ENCODE measurements at regions of chr6 and their contacts with region 1.

Region 1: DNA sequence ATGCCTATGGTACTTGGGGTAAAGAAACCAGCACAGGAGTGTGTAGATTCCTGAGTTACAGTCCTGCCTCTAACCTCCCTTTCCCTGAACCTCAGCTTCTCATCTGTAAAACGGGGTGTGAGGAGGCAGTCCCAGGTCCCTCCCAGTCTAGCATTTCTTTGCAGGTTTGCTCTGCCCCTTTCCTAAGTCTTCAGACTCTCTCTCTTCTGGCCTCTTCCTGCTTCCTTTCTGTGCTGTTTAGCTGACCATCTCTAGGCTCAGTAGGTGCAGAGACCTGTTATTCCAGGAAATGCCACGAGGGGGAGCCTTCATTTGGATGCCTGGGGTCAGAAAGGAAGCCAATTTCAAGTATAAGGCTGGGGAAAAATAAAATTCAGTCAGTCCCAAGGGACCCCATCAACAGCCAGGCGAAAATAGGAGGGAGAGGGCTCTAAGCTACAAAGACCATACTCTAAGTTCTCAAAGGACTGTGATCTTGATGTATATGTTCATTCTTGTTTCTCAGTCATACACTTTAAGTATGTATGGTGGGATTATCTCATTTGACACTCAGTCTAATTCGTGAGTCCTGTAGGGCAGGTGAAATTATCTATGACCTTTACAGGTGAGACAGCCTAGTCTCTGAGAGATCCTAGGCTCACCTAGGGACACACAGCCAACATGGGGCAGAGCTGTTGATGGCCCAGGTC is 89.1 kb downstream of the NCR2 start:
- DNase-seq: peak; percentile 61 to 75 (median 65)
- H3K4me3 ChIP-seq: no peak overlapping the region
- H3K27ac ChIP-seq: no peak overlapping the region
- H3K4me1 ChIP-seq: peaks cover 5 to 36% (median 28%) of the 10 kb centered on the region in 4 experiments
- H3K27me3 ChIP-seq: peaks cover 0 to 53% (median 24%) of the 10 kb centered on the region in 5 experiments

Region 2: GRCh38 chr6:41379306-41379705 is 45.2 kb before region 1 on chr6:
- CTCF ChIA-PET with region 1: interaction called, 10 read pairs
- POLR2A ChIA-PET with region 1: no interaction called
- DNase-seq: peak in 2 of 3 donors; percentile 36 to 40
- H3K4me3 ChIP-seq: no peak overlapping the region
- H3K27ac ChIP-seq: no peak overlapping the region
- H3K4me1 ChIP-seq: peaks cover 0 to 18% (median 10%) of the 10 kb centered on the region in 4 experiments
- H3K27me3 ChIP-seq: peaks cover 17 to 53% (median 32%) of the 10 kb centered on the region in 5 experiments

Region 3: DNA sequence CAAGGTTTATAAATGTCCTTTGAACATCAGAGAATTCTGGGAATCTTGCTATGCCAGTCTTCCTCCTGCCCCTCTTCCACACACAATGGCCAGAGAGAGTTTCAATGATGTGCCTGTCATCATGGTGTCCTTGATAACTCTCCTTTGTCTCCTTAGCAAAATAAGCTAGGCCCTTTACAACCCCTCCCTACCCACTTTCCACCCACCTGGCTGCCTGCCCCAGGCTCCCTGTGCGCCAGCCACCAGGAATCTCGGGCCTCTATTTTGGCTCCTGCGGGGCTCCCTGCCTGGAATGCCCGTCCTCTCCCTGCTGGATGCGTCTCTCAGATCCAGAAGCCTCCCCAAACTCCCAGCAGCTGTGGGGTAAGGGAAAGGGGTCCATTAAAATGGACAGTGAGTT is 28.2 kb before region 1 on chr6:
- CTCF ChIA-PET with region 1: interaction called, 41 read pairs
- POLR2A ChIA-PET with region 1: no interaction called
- DNase-seq: no peak
- H3K4me3 ChIP-seq: no peak overlapping the region
- H3K27ac ChIP-seq: no peak overlapping the region
- H3K4me1 ChIP-seq: no peaks in the 10 kb centered on the region
- H3K27me3 ChIP-seq: peaks cover 2 to 14% (median 8%) of the 10 kb centered on the region in 5 experiments

Region 4: DNA sequence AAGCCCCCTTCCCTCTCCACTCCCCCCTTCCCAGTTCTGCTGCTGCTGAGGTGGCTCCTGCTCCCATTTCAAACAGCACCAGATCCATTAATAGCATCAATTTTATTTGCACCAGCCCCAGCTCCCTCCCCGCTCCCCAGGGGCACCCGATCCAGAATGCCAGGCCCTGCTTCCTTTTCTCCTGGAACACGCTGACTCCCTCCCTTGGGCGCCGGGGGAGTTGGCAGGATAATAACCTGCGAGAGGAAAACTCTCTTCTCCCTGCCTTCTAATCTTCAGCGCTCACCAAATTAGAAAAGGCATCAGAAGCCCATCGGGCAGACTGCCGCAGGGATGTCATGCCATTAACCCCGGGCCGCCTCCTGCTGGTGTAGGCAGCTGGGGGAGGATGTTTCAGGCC is 11.3 kb before region 1 on chr6:
- CTCF ChIA-PET with region 1: interaction called, 12 read pairs
- POLR2A ChIA-PET with region 1: no interaction called
- DNase-seq: no peak
- H3K4me3 ChIP-seq: no peak overlapping the region
- H3K27ac ChIP-seq: no peak overlapping the region
- H3K4me1 ChIP-seq: no peaks in the 10 kb centered on the region
- H3K27me3 ChIP-seq: peaks cover 0 to 31% (median 7%) of the 10 kb centered on the region in 5 experiments

Region 5: DNA sequence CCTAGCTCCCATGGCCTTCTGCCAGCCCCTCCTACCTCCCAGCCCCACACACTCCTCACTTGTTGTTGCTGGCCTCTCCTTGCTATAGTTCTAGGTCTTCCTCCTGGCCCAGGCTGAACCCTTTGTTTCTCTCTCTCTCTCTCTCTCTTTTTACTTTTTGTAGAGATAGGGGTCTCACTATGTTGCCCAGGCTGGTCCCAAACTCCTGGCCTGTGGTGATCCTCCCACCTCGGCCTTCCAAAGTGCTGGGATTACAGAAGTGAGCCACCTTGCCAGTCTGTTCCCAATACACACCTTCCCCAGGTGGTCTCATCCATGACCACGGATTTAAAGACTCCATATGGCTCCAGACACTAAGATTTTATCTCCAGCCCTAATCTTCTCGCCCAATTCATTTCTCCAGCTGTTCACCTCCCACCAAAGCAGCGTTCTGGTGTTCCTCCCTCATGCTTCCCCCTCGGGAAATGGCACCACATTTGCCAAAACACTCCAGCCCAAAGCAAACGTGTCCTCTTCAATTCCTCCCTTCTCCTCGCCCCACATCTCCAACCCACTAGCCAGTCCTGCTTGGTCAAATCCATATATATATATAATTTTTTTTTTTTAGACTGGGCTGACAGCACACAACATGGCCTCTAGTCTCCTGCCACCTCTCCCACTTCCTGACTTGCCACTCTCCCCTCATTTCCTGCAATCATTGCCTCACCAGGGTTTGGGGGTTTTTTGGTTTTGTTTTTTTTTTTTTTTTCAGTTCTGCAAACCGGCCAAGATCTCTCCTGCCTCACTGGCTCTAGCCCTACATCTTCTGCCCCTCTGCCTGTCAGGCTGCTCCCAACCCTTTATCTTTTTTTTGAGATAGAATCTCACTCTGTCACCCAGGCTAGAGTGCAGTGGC is 15.3 kb after region 1 on chr6:
- CTCF ChIA-PET with region 1: interaction called, 19 read pairs
- POLR2A ChIA-PET with region 1: no interaction called
- DNase-seq: peak; percentile 63 to 83 (median 80)
- H3K4me3 ChIP-seq: no peak overlapping the region
- H3K27ac ChIP-seq: no peak overlapping the region
- H3K4me1 ChIP-seq: peaks cover 0 to 37% (median 18%) of the 10 kb centered on the region in 4 experiments
- H3K27me3 ChIP-seq: peaks cover 0 to 51% (median 17%) of the 10 kb centered on the region in 5 experiments

Region 6: DNA sequence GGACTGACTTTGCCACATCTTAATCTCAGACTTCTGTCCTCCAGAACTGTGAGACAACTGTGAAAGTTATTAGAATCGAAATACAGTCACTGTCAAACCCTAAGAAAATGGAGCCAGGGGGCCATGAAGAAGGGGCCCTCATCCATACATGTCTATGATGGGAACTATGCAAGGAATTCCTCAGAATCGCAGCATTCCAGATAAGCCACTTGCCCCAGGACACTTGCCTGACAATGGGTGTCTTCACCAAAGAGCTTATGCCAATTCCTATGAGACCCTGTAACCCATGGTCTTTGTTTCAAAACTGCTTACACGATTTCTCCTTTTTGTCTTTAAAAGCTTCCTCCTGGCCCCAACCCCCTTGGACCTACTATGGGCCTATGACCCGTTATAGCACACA is 31.3 kb after region 1 on chr6:
- CTCF ChIA-PET with region 1: interaction called, 17 read pairs
- POLR2A ChIA-PET with region 1: no interaction called
- DNase-seq: no peak
- H3K4me3 ChIP-seq: no peak overlapping the region
- H3K27ac ChIP-seq: no peak overlapping the region
- H3K4me1 ChIP-seq: no peaks in the 10 kb centered on the region
- H3K27me3 ChIP-seq: peaks cover 0 to 7% (median 2%) of the 10 kb centered on the region in 5 experiments

Region 7: DNA sequence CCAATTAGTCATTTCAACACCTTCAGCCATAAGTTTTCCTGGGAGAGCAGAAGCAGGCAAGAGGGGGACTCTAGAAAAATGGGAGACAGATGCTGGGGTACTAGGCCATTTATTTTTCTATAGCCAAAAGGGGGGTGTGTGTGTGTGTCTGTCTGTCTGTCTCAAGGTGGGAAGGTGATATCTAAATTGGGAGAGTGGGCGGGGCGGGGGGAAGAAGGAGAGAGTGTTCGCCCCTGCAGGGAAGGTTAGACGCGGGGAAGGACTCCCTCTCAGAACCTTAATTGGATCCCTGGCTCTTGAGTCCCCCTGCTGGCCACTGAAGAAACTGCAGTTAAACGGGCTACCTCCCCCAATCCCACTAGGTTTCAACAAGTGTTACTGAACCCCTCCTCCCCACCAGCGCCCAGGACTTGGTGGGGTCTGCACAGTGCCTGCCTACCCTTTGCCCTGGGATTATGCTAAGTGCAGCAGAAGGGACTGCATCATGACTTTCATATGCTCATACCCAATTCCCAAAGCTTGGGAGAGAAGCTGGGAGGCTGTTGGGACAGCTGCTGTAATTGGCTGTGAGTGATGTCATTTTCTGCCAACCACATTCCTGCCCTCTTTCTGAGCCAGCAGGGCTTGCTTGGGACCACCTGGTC is 167.5 kb after region 1 on chr6:
- CTCF ChIA-PET with region 1: interaction called, 19 read pairs
- POLR2A ChIA-PET with region 1: no interaction called
- DNase-seq: peak; percentile 65 to 80 (median 73)
- H3K4me3 ChIP-seq: no peak overlapping the region
- H3K27ac ChIP-seq: no peak overlapping the region
- H3K4me1 ChIP-seq: no peaks in the 10 kb centered on the region
- H3K27me3 ChIP-seq: no peaks in the 10 kb centered on the region

Measured in common myeloid progenitor, CD34-positive (primary cell).